Thyroid gland (tissue), 4 donors: ENCODE measurements at regions of chr22 and their contacts with region 1.

Region 1: DNA sequence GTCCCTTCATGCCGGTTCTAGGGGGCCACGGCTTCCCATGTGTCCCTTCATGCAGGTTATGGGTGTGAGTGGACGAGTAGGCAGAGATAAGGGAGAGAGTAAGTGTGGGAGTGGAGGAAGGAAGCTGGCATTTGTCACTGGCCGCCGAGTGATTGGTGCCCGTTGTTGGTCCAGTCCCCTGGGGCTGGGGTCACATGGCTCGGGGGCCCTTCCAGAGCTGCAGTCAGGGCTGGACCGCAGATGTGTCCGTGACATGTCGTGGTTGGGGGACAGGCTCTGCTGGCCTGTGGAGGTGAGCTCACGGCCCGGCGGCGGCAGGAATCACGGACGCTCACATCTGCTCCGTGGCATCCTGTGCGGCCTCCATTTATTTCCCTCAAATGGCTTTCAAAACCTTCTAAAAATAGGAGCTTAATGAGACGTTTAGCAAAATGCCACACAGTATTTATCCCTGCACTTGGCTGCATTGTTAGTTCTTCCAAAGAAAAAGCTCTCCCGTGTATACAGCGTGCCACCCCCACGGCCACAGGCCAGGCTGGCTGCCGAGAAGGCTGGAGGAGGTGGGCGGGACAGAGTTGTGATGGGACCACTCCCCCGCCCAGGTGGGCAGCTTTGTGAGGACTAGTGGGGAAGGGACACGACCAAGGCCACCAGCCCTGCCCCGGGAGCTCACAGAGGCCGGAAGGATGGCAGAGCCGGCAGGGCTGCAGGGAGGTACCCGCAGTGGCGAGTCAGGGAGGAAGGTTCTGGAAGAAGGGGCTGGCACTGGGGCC is 386.7 kb downstream of the TBC1D22A start:
- DNase-seq: no peak
- H3K4me3 ChIP-seq: no peak overlapping the region
- H3K27ac ChIP-seq: no peak overlapping the region
- H3K4me1 ChIP-seq: peaks cover 5 to 12% of the 10 kb centered on the region in 2 donors
- H3K27me3 ChIP-seq: no peaks in the 10 kb centered on the region
- CTCF ChIP-seq: no peak
- POLR2A ChIP-seq: no peak

Region 2: GRCh38 chr22:46996595-46997310 is 152.4 kb before region 1 on chr22:
- intact Hi-C with region 1: loop called (anchors 10 kb)
- DNase-seq: peak; percentile 52 to 53
- H3K4me3 ChIP-seq: no peak overlapping the region
- H3K27ac ChIP-seq: peak overlapping the region in 2 of 3 donors; percentile 62 to 74
- H3K4me1 ChIP-seq: peaks cover 26 to 40% of the 10 kb centered on the region in 2 donors
- H3K27me3 ChIP-seq: no peaks in the 10 kb centered on the region
- CTCF ChIP-seq: peak in 3 of 6 experiments; percentile 19 to 24 (median 20)
- POLR2A ChIP-seq: no peak